Naive thymus-derived CD4-positive, alpha-beta T cell (primary cell): ENCODE measurements at regions of chr1 and their contacts with region 1.

Region 1: DNA sequence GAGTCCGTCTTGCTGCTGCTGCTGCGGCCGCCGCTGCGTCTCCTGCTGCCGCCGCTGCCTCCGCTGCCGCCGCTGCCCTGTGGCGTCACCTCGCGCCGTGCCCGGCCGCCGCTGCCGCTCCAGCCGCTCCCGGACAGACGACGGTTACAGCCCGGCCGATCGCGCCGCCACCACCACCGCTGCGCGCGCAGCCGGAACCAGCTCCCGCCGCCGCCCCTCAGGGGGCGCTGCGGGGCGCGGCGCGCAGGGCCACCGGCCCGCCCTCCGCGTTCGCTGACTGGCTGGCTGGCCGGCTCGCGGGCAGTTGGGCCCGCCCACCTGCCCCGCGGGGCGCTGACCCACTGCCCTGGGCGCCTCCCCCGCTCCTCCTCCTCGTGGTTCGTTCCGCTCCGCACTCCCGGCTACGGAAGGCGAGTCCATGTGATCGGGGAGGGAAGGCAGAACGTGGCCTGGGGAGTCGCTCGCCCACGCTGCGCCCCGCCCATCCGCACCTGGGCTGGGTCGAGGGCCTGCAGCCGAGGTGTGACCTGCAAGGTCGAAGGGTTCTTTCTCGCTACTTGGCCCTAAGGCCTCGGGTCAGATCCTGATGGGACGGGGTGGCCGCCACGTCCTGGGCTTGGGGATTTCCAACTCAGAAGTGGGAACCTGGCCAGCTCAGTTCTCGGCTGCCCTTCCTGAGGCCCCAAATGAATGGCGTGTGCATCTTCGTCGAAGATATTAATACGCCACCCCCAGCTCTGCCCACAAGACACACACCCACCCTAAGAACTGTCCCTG is at the start of gene PTP4A2:
- DNase-seq: peak; percentile 65 to 93 (median 81)
- ATAC-seq: peak; percentile 84
- H3K4me3 ChIP-seq: peak within 1 kb of the TSS; percentile 81
- H3K4me3 Mint-ChIP-seq: peak within 1 kb of the TSS; percentile 92 to 100 (median 96)
- H3K27ac ChIP-seq: peak within 1 kb of the TSS; percentile 81
- H3K27ac Mint-ChIP-seq: peak within 1 kb of the TSS; percentile 90 to 99 (median 95)
- H3K4me1 ChIP-seq: peaks cover 66 to 67% of the 10 kb centered on the region in 2 donors
- H3K4me1 Mint-ChIP-seq: peaks cover 54 to 82% (median 73%) of the 10 kb centered on the region in 7 donors
- H3K27me3 ChIP-seq: no peaks in the 10 kb centered on the region
- H3K27me3 Mint-ChIP-seq: no peaks in the 10 kb centered on the region
- total RNA-seq, gene PTP4A2: 196 to 449 (median 271) TPM

Region 2: GRCh38 chr1:31065310-31066217 is 872.8 kb before region 1 on chr1 and contains the start of gene PUM1:
- CTCF ChIA-PET with region 1: no interaction called
- POLR2A ChIA-PET with region 1: no interaction called
- intact Hi-C with region 1: loop called (anchors 5 to 10 kb)
- DNase-seq: peak; percentile 95 to 99 (median 97)
- ATAC-seq: peak; percentile 99
- H3K4me3 ChIP-seq: peak within 1 kb of the TSS; percentile 97
- H3K4me3 Mint-ChIP-seq: peak within 1 kb of the TSS; percentile 96 to 100 (median 98)
- H3K27ac ChIP-seq: peak within 1 kb of the TSS; percentile 95
- H3K27ac Mint-ChIP-seq: peak within 1 kb of the TSS; percentile 97 to 99 (median 98)
- H3K4me1 ChIP-seq: peaks cover 10 to 18% of the 10 kb centered on the region in 2 donors
- H3K4me1 Mint-ChIP-seq: peaks cover 20 to 38% (median 29%) of the 10 kb centered on the region in 7 donors
- H3K27me3 ChIP-seq: no peaks in the 10 kb centered on the region
- H3K27me3 Mint-ChIP-seq: no peaks in the 10 kb centered on the region
- total RNA-seq, gene PUM1: 114 to 226 (median 174) TPM

Region 3: GRCh38 chr1:31815752-31816500 is 122.4 kb before region 1 on chr1 and contains the start of gene SPOCD1:
- CTCF ChIA-PET with region 1: interaction called, 5 read pairs
- POLR2A ChIA-PET with region 1: interaction called, 12 read pairs
- intact Hi-C with region 1: loop called (anchors 1 kb)
- DNase-seq: peak; percentile 71 to 86 (median 78)
- ATAC-seq: peak; percentile 98
- H3K4me3 ChIP-seq: no peak within 1 kb of the TSS
- H3K4me3 Mint-ChIP-seq: peak within 1 kb of the TSS in 2 of 10 donors; percentile 18 to 41
- H3K27ac ChIP-seq: no peak within 1 kb of the TSS
- H3K27ac Mint-ChIP-seq: peak within 1 kb of the TSS; percentile 33 to 81 (median 48)
- H3K4me1 ChIP-seq: peaks cover 0 to 7% of the 10 kb centered on the region in 2 donors
- H3K4me1 Mint-ChIP-seq: peaks cover 6 to 24% (median 13%) of the 10 kb centered on the region in 7 donors
- H3K27me3 ChIP-seq: no peaks in the 10 kb centered on the region
- H3K27me3 Mint-ChIP-seq: no peaks in the 10 kb centered on the region
- total RNA-seq, gene SPOCD1: 0.21 to 0.38 TPM in 2 of 5 experiments, not detected in the others

Region 4: GRCh38 chr1:31891280-31891679 is 47.1 kb before region 1 on chr1:
- CTCF ChIA-PET with region 1: interaction called, 3 read pairs
- POLR2A ChIA-PET with region 1: interaction called, 17 read pairs
- intact Hi-C with region 1: loop called in 1 of 2 experiments (anchors 2 kb)
- DNase-seq: no peak
- ATAC-seq: no peak
- H3K4me3 ChIP-seq: no peak overlapping the region
- H3K4me3 Mint-ChIP-seq: peak overlapping the region in 2 of 10 donors; percentile 0 to 1
- H3K27ac ChIP-seq: no peak overlapping the region
- H3K27ac Mint-ChIP-seq: peak overlapping the region in 4 of 9 donors; percentile 1 to 98 (median 37)
- H3K4me1 ChIP-seq: peaks cover 13 to 21% of the 10 kb centered on the region in 2 donors
- H3K4me1 Mint-ChIP-seq: peaks cover 14 to 30% (median 21%) of the 10 kb centered on the region in 7 donors
- H3K27me3 ChIP-seq: no peaks in the 10 kb centered on the region
- H3K27me3 Mint-ChIP-seq: no peaks in the 10 kb centered on the region

Region 5: GRCh38 chr1:31955917-31956736 is 17.8 kb after region 1 on chr1:
- CTCF ChIA-PET with region 1: interaction called, 52 read pairs
- POLR2A ChIA-PET with region 1: interaction called, 248 read pairs
- intact Hi-C with region 1: loop called (anchors 1 kb)
- DNase-seq: peak in 7 of 9 donors; percentile 31 to 79 (median 51)
- ATAC-seq: peak; percentile 93
- H3K4me3 ChIP-seq: no peak overlapping the region
- H3K4me3 Mint-ChIP-seq: peak overlapping the region; percentile 10 to 79 (median 59)
- H3K27ac ChIP-seq: peak overlapping the region; percentile 8
- H3K27ac Mint-ChIP-seq: peak overlapping the region; percentile 15 to 91 (median 83)
- H3K4me1 ChIP-seq: peaks cover 31 to 42% of the 10 kb centered on the region in 2 donors
- H3K4me1 Mint-ChIP-seq: peaks cover 45 to 76% (median 73%) of the 10 kb centered on the region in 7 donors
- H3K27me3 ChIP-seq: no peaks in the 10 kb centered on the region
- H3K27me3 Mint-ChIP-seq: no peaks in the 10 kb centered on the region

Region 6: GRCh38 chr1:32072622-32073298 is 134.4 kb after region 1 on chr1 and contains the start of gene TMEM39B:
- CTCF ChIA-PET with region 1: no interaction called
- POLR2A ChIA-PET with region 1: interaction called, 3 read pairs
- intact Hi-C with region 1: loop called (anchors 1 to 5 kb)
- DNase-seq: peak; percentile 90 to 97 (median 96)
- ATAC-seq: peak; percentile 92
- H3K4me3 ChIP-seq: peak within 1 kb of the TSS; percentile 98
- H3K4me3 Mint-ChIP-seq: peak within 1 kb of the TSS; percentile 83 to 94 (median 91)
- H3K27ac ChIP-seq: peak within 1 kb of the TSS; percentile 82
- H3K27ac Mint-ChIP-seq: peak within 1 kb of the TSS; percentile 84 to 95 (median 92)
- H3K4me1 ChIP-seq: peaks cover 5 to 16% of the 10 kb centered on the region in 2 donors
- H3K4me1 Mint-ChIP-seq: peaks cover 21 to 58% (median 47%) of the 10 kb centered on the region in 7 donors
- H3K27me3 ChIP-seq: no peaks in the 10 kb centered on the region
- H3K27me3 Mint-ChIP-seq: no peaks in the 10 kb centered on the region
- total RNA-seq, gene TMEM39B: 11.4 to 35.9 (median 26.4) TPM

Region 7: GRCh38 chr1:32151319-32151787 is 213.0 kb after region 1 on chr1:
- CTCF ChIA-PET with region 1: no interaction called
- POLR2A ChIA-PET with region 1: no interaction called
- intact Hi-C with region 1: no loop called
- DNase-seq: no peak
- ATAC-seq: no peak
- H3K4me3 ChIP-seq: no peak overlapping the region
- H3K4me3 Mint-ChIP-seq: no peak overlapping the region
- H3K27ac ChIP-seq: no peak overlapping the region
- H3K27ac Mint-ChIP-seq: peak overlapping the region in 4 of 9 donors; percentile 1 to 60 (median 46)
- H3K4me1 ChIP-seq: no peaks in the 10 kb centered on the region
- H3K4me1 Mint-ChIP-seq: peaks cover 4 to 31% (median 23%) of the 10 kb centered on the region in 7 donors
- H3K27me3 ChIP-seq: no peaks in the 10 kb centered on the region
- H3K27me3 Mint-ChIP-seq: no peaks in the 10 kb centered on the region